Activated CD8-positive, alpha-beta T cell treated with anti-CD3 and anti-CD28 coated beads for 36 hours (primary cell): ENCODE measurements at regions of chr6 and their contacts with region 1.

Region 1: DNA sequence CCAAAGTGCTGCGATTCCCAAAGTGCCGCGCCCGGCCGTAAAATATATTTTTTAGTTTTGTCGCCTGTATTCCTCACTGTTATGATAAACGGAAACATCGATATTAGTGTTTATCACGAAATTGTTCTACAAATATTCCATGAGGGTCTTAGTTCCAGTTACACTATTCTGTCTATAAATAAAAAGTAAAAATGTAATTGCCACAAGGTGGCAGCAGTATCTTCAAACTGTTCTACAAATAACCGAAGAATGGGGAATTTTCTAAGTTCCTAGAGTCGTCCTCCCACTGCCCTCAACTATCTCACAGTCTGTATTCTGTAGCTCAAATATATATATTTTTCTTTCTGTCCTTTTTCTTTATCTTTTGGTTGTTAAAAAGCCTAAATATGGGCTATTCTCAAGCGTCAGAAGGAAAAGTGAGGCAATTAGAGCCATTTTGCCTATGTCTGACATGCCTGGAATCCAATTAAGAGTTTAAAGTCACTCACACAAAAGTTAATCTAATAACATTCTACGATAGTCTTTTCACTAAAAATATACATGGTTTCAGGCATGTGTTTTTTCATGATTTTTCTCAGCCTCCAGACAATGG is 14.2 kb upstream of the FAM162B start:
- DNase-seq: no peak
- ATAC-seq: no peak
- H3K4me3 Mint-ChIP-seq: no peak overlapping the region
- H3K27ac Mint-ChIP-seq: no peak overlapping the region
- H3K4me1 Mint-ChIP-seq: no peaks in the 10 kb centered on the region
- H3K27me3 Mint-ChIP-seq: peaks cover 7% of the 10 kb centered on the region
- CTCF ChIP-seq: peak; percentile 57

Region 2: GRCh38 chr6:116847227-116847626 is 67.6 kb after region 1 on chr6:
- CTCF ChIA-PET with region 1: no interaction called
- POLR2A ChIA-PET with region 1: no interaction called
- intact Hi-C with region 1: loop called (anchors 5 kb)
- DNase-seq: no peak
- ATAC-seq: no peak
- H3K4me3 Mint-ChIP-seq: no peak overlapping the region
- H3K27ac Mint-ChIP-seq: no peak overlapping the region
- H3K4me1 Mint-ChIP-seq: no peaks in the 10 kb centered on the region
- H3K27me3 Mint-ChIP-seq: no peaks in the 10 kb centered on the region
- CTCF ChIP-seq: peak; percentile 27

Region 3: GRCh38 chr6:116925088-116925794 is 145.6 kb after region 1 on chr6:
- CTCF ChIA-PET with region 1: no interaction called
- POLR2A ChIA-PET with region 1: no interaction called
- intact Hi-C with region 1: no loop called
- DNase-seq: no peak
- ATAC-seq: no peak
- H3K4me3 Mint-ChIP-seq: no peak overlapping the region
- H3K27ac Mint-ChIP-seq: no peak overlapping the region
- H3K4me1 Mint-ChIP-seq: no peaks in the 10 kb centered on the region
- H3K27me3 Mint-ChIP-seq: peaks cover 1% of the 10 kb centered on the region
- CTCF ChIP-seq: no peak